Posterior vena cava (tissue), 2 donors: ENCODE measurements at regions of chr22 and their contacts with region 1.

Region 1: GRCh38 chr22:42473484-42474193 is 41.4 kb upstream of the NFAM1 start:
- DNase-seq: no peak

Region 2: GRCh38 chr22:42459287-42460063 is 14.2 kb before region 1 on chr22:
- intact Hi-C with region 1: loop called in 1 of 2 experiments (anchors 2 kb)
- DNase-seq: no peak

Region 3: DNA sequence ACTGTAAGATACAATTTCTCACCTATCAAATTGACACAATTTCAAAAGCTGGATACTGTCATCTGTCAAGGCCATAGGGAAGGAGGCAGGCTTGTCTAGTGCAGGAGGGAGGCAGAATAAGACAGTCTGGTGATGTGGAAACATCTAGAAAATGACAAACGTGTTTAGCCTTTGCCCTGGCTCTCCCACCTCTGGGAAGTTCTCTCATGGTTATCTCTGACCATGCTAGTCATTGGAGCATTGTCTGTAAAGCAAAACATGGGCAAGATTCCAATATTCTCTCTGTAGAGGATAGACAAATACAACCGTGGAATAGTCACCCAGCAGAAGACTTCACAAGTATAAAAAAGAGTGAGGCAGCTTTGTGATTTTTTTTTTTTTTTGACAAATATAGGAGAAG is 71.0 kb after region 1 on chr22:
- intact Hi-C with region 1: no loop called
- DNase-seq: no peak